Testis (tissue), 5 donors: ENCODE measurements at regions of chr7 and their contacts with region 1.

Region 1: GRCh38 chr7:150404805-150405583 is 25.9 kb downstream of the ZNF775 start:
- DNase-seq: peak; percentile 95
- H3K4me3 ChIP-seq: peak overlapping the region; percentile 77 to 93
- H3K27ac ChIP-seq: peak overlapping the region; percentile 96
- H3K4me1 ChIP-seq: peaks cover 36% of the 10 kb centered on the region
- H3K27me3 ChIP-seq: no peaks in the 10 kb centered on the region
- CTCF ChIP-seq: no peak
- POLR2A ChIP-seq: no peak

Region 2: DNA sequence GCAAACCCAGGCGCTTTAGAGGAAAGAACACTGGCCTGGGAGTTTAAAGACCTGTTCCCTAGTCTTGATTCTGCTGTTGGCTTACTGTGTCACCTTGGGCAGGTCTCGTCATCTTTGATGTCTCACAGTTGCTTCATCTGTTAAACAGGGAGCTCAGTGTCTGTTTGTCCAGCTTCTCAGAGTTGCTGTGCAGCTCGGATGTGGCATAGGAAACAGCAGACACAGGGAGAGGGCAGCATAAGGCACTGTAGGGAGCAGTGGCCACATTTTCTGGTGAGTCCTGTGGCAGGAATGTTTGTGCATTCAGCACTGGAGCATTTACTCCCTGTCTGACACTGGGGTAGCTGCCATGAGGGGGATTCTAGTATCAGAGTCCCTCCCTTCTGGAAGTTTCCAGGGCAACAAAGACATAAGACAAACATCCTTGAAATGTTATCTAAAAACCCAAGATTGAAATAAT is 34.4 kb before region 1 on chr7:
- intact Hi-C with region 1: loop called (anchors 5 kb)
- DNase-seq: no peak
- H3K4me3 ChIP-seq: no peak overlapping the region
- H3K27ac ChIP-seq: no peak overlapping the region
- H3K4me1 ChIP-seq: peaks cover 19% of the 10 kb centered on the region
- H3K27me3 ChIP-seq: no peaks in the 10 kb centered on the region
- CTCF ChIP-seq: no peak
- POLR2A ChIP-seq: no peak